Activated CD4-positive, alpha-beta T cell treated with anti-CD3 and anti-CD28 coated beads for 36 hours (primary cell): ENCODE measurements at regions of chr13 and their contacts with region 1.

Region 1: DNA sequence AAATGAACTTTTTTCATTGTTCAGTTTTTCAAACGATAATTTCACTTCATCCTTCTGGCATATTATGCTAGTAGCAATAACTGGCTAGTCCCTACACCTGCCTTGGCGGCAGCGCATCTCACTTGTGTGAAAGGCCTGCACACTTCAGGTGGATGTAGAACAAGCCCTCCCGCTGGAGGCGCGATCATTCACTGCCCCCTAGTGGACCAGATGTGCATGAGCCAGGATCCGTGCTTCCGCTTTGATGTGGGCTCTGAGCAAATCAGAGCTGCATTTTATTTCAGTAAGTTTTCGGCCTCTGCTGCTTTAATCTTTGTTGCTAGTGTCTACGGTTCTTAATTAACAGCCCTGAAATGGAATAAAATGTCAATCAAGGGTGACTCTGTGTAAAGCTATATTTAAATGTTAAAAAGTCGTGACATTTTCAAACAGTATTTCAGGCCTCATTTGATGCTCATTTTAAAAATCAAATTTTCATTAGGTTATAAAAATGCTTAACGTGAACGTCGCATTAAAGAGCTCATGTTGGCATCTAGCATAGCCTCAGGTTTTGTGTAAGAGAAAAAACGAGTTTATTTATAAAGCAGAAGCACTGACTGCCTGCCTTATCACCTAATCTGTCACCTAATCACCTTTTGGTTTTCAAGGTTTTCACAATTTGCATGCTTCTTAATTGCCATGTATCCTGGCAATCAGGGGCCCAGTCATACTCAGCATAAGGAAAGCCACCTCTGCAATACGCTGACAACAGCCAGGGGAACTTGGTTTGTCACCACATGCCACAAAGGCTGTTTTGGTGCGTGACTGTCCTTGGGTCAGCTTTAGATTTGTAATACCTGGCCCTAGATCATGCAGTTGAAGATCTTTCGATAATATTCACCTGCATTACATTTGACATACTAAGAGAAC is 112.2 kb downstream of the TEX26 start:
- DNase-seq: peak; percentile 91
- ATAC-seq: peak; percentile 69
- H3K4me3 Mint-ChIP-seq: peak overlapping the region; percentile 28
- H3K27ac Mint-ChIP-seq: peak overlapping the region; percentile 89
- H3K4me1 Mint-ChIP-seq: peaks cover 46% of the 10 kb centered on the region
- H3K27me3 Mint-ChIP-seq: peaks cover 6% of the 10 kb centered on the region

Region 2: GRCh38 chr13:30306762-30307193 is 737.9 kb before region 1 on chr13:
- CTCF ChIA-PET with region 1: no interaction called
- POLR2A ChIA-PET with region 1: no interaction called
- intact Hi-C with region 1: loop called in 1 of 2 experiments (anchors 5 kb)
- DNase-seq: peak; percentile 95
- ATAC-seq: peak; percentile 91
- H3K4me3 Mint-ChIP-seq: peak overlapping the region; percentile 80
- H3K27ac Mint-ChIP-seq: peak overlapping the region; percentile 79
- H3K4me1 Mint-ChIP-seq: peaks cover 31% of the 10 kb centered on the region
- H3K27me3 Mint-ChIP-seq: no peaks in the 10 kb centered on the region

Region 3: DNA sequence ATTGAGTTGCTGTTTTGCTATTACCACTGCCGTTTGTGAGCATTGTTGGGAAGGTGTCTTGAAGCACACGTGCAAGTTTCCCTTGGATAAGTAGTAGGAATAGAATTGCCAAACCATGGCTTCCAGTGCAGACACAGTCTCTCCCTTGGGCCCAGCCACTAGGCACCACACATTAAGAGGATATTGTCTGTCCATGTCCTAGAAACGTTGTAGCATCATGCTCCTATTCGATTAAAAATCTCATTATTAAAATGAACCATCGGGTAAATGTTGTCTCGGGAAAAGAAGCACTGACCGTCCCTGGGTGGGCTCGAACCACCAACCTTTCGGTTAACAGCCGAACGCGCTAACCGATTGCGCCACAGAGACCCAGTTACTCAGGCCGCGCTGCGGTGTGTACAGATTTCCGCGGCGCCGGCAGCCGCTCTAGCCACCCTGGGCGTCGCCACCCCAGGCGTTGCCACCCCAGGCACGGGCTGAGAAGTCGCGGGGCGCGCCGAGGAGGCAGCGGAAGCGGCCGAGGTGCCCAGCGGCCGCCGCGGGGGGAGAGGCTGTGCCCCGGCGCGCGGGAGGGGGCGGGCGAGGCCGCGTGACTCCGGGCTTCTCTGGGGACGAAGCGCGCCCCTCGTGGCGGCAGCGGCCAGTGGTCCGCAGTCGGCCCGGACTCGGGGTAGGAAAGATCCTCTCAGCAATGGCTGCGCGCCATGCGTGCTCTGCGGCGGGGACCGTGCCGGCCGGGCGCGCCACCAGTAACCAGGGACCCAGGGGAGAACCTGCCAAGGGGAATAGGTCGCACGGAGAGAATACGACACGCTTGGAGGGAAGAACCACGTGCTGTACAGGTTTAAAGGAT is 370.7 kb before region 1 on chr13:
- CTCF ChIA-PET with region 1: no interaction called
- POLR2A ChIA-PET with region 1: no interaction called
- intact Hi-C with region 1: loop called (anchors 2 to 10 kb)
- DNase-seq: peak; percentile 92
- ATAC-seq: peak; percentile 97
- H3K4me3 Mint-ChIP-seq: peak overlapping the region; percentile 72
- H3K27ac Mint-ChIP-seq: peak overlapping the region; percentile 73
- H3K4me1 Mint-ChIP-seq: peaks cover 12% of the 10 kb centered on the region
- H3K27me3 Mint-ChIP-seq: no peaks in the 10 kb centered on the region

Region 4: DNA sequence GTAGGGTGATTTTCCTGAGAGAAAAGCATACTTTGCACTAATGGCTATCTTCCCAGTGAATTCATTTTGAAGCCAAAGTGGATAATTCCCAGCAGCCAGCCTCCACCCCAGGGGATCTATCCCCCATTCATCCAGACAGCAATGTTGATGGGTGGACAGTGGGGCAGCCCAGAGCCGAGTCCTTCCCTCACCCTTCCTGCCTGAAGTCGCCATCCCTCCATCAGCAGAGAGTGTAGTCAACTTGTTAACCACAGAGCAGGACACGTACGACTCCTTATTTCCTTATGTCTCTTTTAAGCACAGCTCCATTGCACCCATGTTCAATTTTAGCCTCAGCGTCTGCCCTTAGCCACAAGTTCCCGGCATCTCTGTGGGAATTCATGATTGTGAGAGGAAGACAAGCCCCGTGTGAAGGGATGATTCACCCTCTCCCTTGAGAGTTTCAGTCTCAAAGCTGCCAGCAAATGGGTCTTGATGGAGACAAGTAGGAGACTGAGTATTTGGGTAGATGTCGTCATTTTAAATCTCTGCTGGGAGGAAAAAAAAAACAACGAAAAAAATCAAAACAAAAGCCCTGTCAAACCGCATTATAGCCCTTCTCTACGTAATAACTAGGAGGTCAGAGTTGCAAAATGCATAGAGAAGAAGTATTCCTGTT is 196.9 kb before region 1 on chr13:
- CTCF ChIA-PET with region 1: interaction called, 7 read pairs
- POLR2A ChIA-PET with region 1: no interaction called
- intact Hi-C with region 1: loop called in 1 of 2 experiments (anchors 2 kb)
- DNase-seq: peak; percentile 50
- ATAC-seq: peak; percentile 83
- H3K4me3 Mint-ChIP-seq: no peak overlapping the region
- H3K27ac Mint-ChIP-seq: peak overlapping the region; percentile 41
- H3K4me1 Mint-ChIP-seq: peaks cover 15% of the 10 kb centered on the region
- H3K27me3 Mint-ChIP-seq: peaks cover 5% of the 10 kb centered on the region

Region 5: DNA sequence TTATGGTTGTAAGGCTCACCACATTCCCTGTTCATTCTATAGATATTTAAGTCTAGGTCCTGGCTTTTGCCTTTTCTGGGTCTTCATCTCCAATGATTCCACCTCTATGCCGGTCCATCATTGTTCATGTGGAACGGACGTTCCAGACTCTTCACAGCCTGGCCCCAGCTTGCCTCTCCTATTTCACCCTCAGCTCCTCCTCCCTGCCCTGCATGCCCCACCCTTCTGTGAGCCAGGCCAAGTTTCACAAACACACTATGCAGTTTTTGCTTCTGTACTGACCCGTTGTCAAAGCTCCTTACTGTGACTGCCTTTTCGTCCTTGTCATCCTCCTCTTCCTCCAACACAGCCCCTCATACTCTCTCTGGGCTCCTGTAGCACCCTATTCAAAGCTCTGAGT is 80.8 kb before region 1 on chr13:
- CTCF ChIA-PET with region 1: no interaction called
- POLR2A ChIA-PET with region 1: no interaction called
- intact Hi-C with region 1: no loop called
- DNase-seq: no peak
- ATAC-seq: no peak
- H3K4me3 Mint-ChIP-seq: no peak overlapping the region
- H3K27ac Mint-ChIP-seq: no peak overlapping the region
- H3K4me1 Mint-ChIP-seq: no peaks in the 10 kb centered on the region
- H3K27me3 Mint-ChIP-seq: peaks cover 40% of the 10 kb centered on the region

Region 6: DNA sequence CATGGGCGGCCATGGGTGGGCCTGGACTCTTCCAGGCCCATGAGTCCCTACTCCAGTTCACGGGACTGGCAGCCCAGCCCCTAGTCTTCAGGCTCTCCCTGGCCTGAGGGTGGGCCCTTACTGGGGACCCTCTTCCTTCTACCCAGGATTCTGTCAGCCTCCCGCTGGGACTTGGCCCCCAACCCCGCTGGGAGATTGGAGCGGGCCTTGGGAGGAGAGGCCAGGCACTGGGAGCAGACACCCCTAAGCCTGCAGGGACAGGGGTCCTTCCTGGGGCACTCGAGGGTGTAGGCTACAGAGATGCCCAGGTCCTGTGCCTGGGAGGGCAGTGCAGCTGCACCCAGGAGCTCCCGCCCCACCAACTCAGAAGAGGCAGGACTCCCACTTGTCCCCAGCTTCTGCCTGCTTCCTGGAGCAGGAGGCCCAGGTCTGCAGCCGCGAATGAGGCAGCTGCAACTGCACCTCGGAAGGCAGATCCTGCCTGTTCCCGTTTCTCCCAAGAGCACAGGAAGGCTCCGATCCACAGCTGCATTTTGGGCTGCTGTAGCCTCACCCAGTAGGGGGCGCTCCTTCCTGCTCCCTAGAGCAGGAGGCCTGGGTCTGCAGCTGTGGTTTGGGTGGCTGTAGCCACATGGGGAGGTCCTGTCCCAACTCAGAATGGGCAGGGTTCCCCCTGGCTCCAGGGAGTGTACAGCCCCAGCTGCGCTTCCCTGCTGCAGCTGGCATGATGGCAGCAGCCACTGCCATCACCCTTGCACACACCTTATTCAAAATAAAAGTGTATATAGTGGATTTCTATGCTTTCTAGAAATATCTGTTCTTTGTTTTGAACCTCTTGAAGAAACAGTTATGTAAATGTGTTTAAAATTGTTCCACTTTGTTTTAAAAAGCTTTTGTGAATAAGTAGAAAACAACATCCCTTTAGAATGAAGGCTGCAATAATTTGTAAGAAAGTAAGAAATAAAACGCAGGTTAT is 65.4 kb before region 1 on chr13:
- CTCF ChIA-PET with region 1: interaction called, 15 read pairs
- POLR2A ChIA-PET with region 1: no interaction called
- intact Hi-C with region 1: loop called (anchors 1 kb)
- DNase-seq: peak; percentile 75
- ATAC-seq: no peak
- H3K4me3 Mint-ChIP-seq: no peak overlapping the region
- H3K27ac Mint-ChIP-seq: no peak overlapping the region
- H3K4me1 Mint-ChIP-seq: no peaks in the 10 kb centered on the region
- H3K27me3 Mint-ChIP-seq: peaks cover 14% of the 10 kb centered on the region

Region 7: GRCh38 chr13:31161828-31162590 is 117.4 kb after region 1 on chr13 and contains the start of gene HSPH1:
- CTCF ChIA-PET with region 1: interaction called, 9 read pairs
- POLR2A ChIA-PET with region 1: interaction called, 4 read pairs
- intact Hi-C with region 1: loop called (anchors 1 kb)
- DNase-seq: peak; percentile 99
- ATAC-seq: peak; percentile 91
- H3K4me3 Mint-ChIP-seq: peak within 1 kb of the TSS; percentile 88
- H3K27ac Mint-ChIP-seq: peak within 1 kb of the TSS; percentile 100
- H3K4me1 Mint-ChIP-seq: peaks cover 31% of the 10 kb centered on the region
- H3K27me3 Mint-ChIP-seq: no peaks in the 10 kb centered on the region
- total RNA-seq, gene HSPH1: 229 to 259 TPM